Dorsolateral prefrontal cortex (tissue), 120 donors: ENCODE measurements at regions of chr18 and their contacts with region 1.

Region 1: DNA sequence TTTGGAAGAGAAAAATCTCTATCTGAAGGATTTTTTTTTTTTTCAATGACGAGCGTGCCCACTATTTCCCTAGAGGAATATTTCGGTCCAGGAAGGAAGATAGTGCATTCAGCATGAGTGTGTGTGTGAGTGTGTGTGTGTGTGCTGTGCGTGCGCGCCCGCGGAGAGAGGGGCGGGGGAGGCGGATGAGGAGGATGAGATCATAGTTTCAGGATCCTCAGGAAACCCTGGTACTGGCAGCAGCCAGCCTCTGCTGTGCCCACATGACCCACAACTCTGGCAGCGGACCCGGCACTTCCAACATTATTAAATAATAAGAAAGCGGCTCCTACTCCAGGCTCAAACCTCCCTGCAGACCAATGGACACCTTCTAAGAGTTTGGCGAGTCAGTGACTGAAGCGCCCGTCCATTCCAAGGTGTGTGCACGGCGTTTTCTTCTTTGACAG is 217.0 kb upstream of the DTNA start:
- DNase-seq: peak; percentile 65 to 89 (median 84)
- H3K4me3 ChIP-seq: peak overlapping the region; percentile 29 to 83 (median 70)
- H3K27ac ChIP-seq: peak overlapping the region in 52 of 59 donors; percentile 19 to 91 (median 74)
- H3K27me3 ChIP-seq: no peaks in the 10 kb centered on the region
- CTCF ChIP-seq: no peak

Region 2: GRCh38 chr18:34224423-34225217 is 268.5 kb before region 1 on chr18 and contains the start of gene NOL4:
- intact Hi-C with region 1: loop called in 1 of 2 experiments (anchors 5 kb)
- DNase-seq: peak; percentile 63 to 94 (median 89)
- H3K4me3 ChIP-seq: peak within 1 kb of the TSS; percentile 48 to 88 (median 73)
- H3K27ac ChIP-seq: peak within 1 kb of the TSS in 58 of 59 donors; percentile 49 to 95 (median 87)
- H3K27me3 ChIP-seq: peaks cover 0 to 26% (median 0%) of the 10 kb centered on the region in 45 donors
- CTCF ChIP-seq: peak in 52 of 56 donors; percentile 20 to 69 (median 48)
- total RNA-seq, gene NOL4: 16.4 to 90.6 (median 56.2) TPM

Region 3: GRCh38 chr18:34562252-34562870 is 69.2 kb after region 1 on chr18:
- intact Hi-C with region 1: no loop called
- DNase-seq: no peak
- H3K4me3 ChIP-seq: no peak overlapping the region
- H3K27ac ChIP-seq: no peak overlapping the region
- H3K27me3 ChIP-seq: no peaks in the 10 kb centered on the region
- CTCF ChIP-seq: no peak

Region 4: DNA sequence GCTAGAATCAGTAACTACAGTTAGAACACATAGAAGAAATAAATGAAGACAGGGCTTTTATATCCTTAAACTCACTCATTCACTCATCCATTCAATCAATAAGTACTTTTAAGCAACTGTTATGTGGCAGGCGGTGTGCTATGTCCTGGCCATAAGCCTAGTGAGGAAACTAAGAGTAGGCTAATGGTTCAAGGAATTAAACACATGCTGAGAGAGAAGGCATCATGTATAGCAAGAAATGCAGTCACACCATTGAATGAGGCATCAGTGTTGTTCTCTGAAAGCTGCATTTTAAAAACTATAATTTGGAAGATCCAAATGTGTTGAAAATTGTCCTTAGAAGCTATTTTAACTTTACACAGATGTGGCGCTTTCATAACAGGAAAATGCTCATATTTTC is 130.4 kb after region 1 on chr18:
- intact Hi-C with region 1: no loop called
- DNase-seq: no peak
- H3K4me3 ChIP-seq: no peak overlapping the region
- H3K27ac ChIP-seq: peak overlapping the region in 11 of 59 donors; percentile 1 to 62 (median 20)
- H3K27me3 ChIP-seq: no peaks in the 10 kb centered on the region
- CTCF ChIP-seq: no peak

Region 5: GRCh38 chr18:34647251-34647650 is 154.1 kb after region 1 on chr18:
- intact Hi-C with region 1: loop called in 1 of 2 experiments (anchors 5 kb)
- DNase-seq: no peak
- H3K4me3 ChIP-seq: no peak overlapping the region
- H3K27ac ChIP-seq: no peak overlapping the region
- H3K27me3 ChIP-seq: no peaks in the 10 kb centered on the region
- CTCF ChIP-seq: no peak

Region 6: GRCh38 chr18:34773961-34774766 is 281.0 kb after region 1 on chr18:
- intact Hi-C with region 1: loop called in 1 of 2 experiments (anchors 10 kb)
- DNase-seq: peak in 8 of 10 donors; percentile 33 to 72 (median 46)
- H3K4me3 ChIP-seq: peak overlapping the region in 17 of 59 donors; percentile 0 to 50 (median 22)
- H3K27ac ChIP-seq: peak overlapping the region in 47 of 59 donors; percentile 0 to 81 (median 52)
- H3K27me3 ChIP-seq: no peaks in the 10 kb centered on the region
- CTCF ChIP-seq: no peak

Region 7: GRCh38 chr18:34787931-34788532 is 294.9 kb after region 1 on chr18:
- intact Hi-C with region 1: loop called in 1 of 2 experiments (anchors 10 kb)
- DNase-seq: peak in 2 of 10 donors; percentile 48 to 60
- H3K4me3 ChIP-seq: no peak overlapping the region
- H3K27ac ChIP-seq: peak overlapping the region in 5 of 59 donors; percentile 0 to 36 (median 9)
- H3K27me3 ChIP-seq: no peaks in the 10 kb centered on the region
- CTCF ChIP-seq: peak; percentile 72 to 96 (median 84)

Region 8: GRCh38 chr18:34821749-34822148 is 328.6 kb after region 1 on chr18:
- intact Hi-C with region 1: no loop called
- DNase-seq: no peak
- H3K4me3 ChIP-seq: peak overlapping the region in 35 of 59 donors; percentile 3 to 54 (median 26)
- H3K27ac ChIP-seq: peak overlapping the region in 47 of 59 donors; percentile 4 to 89 (median 57)
- H3K27me3 ChIP-seq: no peaks in the 10 kb centered on the region
- CTCF ChIP-seq: no peak